Activated T-helper 2 cell treated with anti-CD3 and anti-CD28 coated beads, Interferon-gamma antibody, Interleukin-2, Interleukin-4, amounts not matched to agents 10 μg/mL and 5 μg/mL and 100 μg/mL, durations not matched to agents 14 hours and 24 hours and 36 hours (primary cell): ENCODE measurements at regions of chr6 and their contacts with region 1.

Region 1: GRCh38 chr6:110981202-110981600 is 637 bp upstream of the RPF2 start:
- DNase-seq: no peak
- H3K4me3 Mint-ChIP-seq: peak overlapping the region; percentile 97
- H3K27ac Mint-ChIP-seq: peak overlapping the region; percentile 98
- H3K4me1 Mint-ChIP-seq: peaks cover 30% of the 10 kb centered on the region
- H3K27me3 Mint-ChIP-seq: no peaks in the 10 kb centered on the region

Region 2: GRCh38 chr6:110958329-110959192 is 22.6 kb before region 1 on chr6 and contains the start of gene GTF3C6:
- intact Hi-C with region 1: loop called (anchors 1 kb)
- DNase-seq: peak; percentile 93
- H3K4me3 Mint-ChIP-seq: peak within 1 kb of the TSS; percentile 99
- H3K27ac Mint-ChIP-seq: peak within 1 kb of the TSS; percentile 99
- H3K4me1 Mint-ChIP-seq: peaks cover 13% of the 10 kb centered on the region
- H3K27me3 Mint-ChIP-seq: no peaks in the 10 kb centered on the region
- total RNA-seq, gene GTF3C6: 141 and 146 TPM in 2 replicates